ENCODE measurements at regions of chr7 and their contacts with region 1.

Region 1: GRCh38 chr7:130292682-130293257 is at the start of gene CPA4:
- DNase-seq: peak; percentile 74 to 82
- ATAC-seq: peak; percentile 87
- H3K4me3 ChIP-seq: no peak within 1 kb of the TSS
- H3K27ac ChIP-seq: peak within 1 kb of the TSS; percentile 58 to 93
- H3K4me1 ChIP-seq: peaks cover 0 to 4% of the 10 kb centered on the region in 2 donors
- H3K27me3 ChIP-seq: no peaks in the 10 kb centered on the region
- total RNA-seq, gene CPA4: 0.45 to 1.0 TPM

Region 2: DNA sequence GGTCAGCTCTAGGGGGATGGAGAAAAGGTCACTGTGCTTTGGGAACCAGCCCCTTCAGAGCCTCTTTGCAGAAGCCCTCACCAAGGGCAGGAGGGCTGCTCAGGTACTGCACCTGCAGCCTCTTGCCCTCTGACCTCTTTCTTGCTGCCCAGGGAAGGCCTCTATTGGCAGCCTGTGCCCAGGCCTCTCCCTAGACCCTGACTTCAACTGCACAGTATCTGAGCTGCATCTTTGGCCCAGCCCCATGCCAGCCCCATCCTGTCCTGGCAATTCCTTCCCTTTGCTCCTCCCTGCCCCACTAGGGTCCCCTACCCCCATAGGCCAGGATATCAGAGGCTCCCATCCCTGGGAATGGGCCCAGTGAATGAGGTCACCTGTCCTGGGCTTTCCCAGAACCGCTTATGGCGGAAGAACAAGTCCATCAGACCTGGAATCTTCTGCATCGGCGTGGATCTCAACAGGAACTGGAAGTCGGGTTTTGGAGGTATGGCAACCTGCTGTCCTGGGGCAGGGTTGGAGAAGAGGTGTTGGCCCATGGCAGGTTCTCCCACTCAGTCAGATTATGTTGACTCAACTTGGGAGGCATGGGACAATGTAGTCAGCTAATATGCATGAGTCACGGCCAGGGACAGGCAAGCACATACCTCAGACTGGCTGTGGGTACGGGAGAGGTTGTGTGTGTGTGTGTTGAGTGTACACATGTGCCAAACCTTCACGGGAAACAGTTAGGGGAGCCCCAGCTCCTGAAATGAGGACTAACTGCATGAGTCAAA is 70.4 kb after region 1 on chr7:
- intact Hi-C with region 1: loop called in 1 of 2 experiments (anchors 5 kb)
- DNase-seq: peak in 1 of 2 donors; percentile 69
- ATAC-seq: peak; percentile 66
- H3K4me3 ChIP-seq: no peak overlapping the region
- H3K27ac ChIP-seq: no peak overlapping the region
- H3K4me1 ChIP-seq: no peaks in the 10 kb centered on the region
- H3K27me3 ChIP-seq: no peaks in the 10 kb centered on the region

Region 3: GRCh38 chr7:130379921-130380860 is 87.4 kb after region 1 on chr7 and contains the start of gene CPA1:
- intact Hi-C with region 1: no loop called
- DNase-seq: no peak
- ATAC-seq: peak; percentile 17
- H3K4me3 ChIP-seq: no peak within 1 kb of the TSS
- H3K27ac ChIP-seq: no peak within 1 kb of the TSS
- H3K4me1 ChIP-seq: no peaks in the 10 kb centered on the region
- H3K27me3 ChIP-seq: no peaks in the 10 kb centered on the region
- total RNA-seq, gene CPA1: 3.6 to 5.9 TPM

Region 4: GRCh38 chr7:130440527-130441365 is 148.0 kb after region 1 on chr7 and contains the start of gene CEP41:
- intact Hi-C with region 1: loop called in 1 of 2 experiments (anchors 5 kb)
- DNase-seq: peak; percentile 98 to 99
- ATAC-seq: peak; percentile 98
- H3K4me3 ChIP-seq: peak within 1 kb of the TSS; percentile 61 to 80
- H3K27ac ChIP-seq: no peak within 1 kb of the TSS
- H3K4me1 ChIP-seq: no peaks in the 10 kb centered on the region
- H3K27me3 ChIP-seq: no peaks in the 10 kb centered on the region
- total RNA-seq, gene CEP41: 6.2 to 6.6 TPM